Activated CD4-positive, alpha-beta T cell treated with anti-CD3 and anti-CD28 coated beads, Interleukin-2, amount 10 ng/mL, durations not matched to agents 24 days and 14 days (primary cell): ENCODE measurements at regions of chr7 and their contacts with region 1.

Region 1: GRCh38 chr7:39589323-39590111 is 23.3 kb downstream of the YAE1 start:
- DNase-seq: peak; percentile 93
- H3K4me3 Mint-ChIP-seq: peak overlapping the region; percentile 73
- H3K27ac Mint-ChIP-seq: peak overlapping the region; percentile 93
- H3K4me1 Mint-ChIP-seq: peaks cover 38% of the 10 kb centered on the region
- H3K27me3 Mint-ChIP-seq: peaks cover 2% of the 10 kb centered on the region

Region 2: GRCh38 chr7:39609113-39609934 is 19.8 kb after region 1 on chr7:
- intact Hi-C with region 1: loop called (anchors 2 kb)
- DNase-seq: no peak
- H3K4me3 Mint-ChIP-seq: peak overlapping the region; percentile 56
- H3K27ac Mint-ChIP-seq: no peak overlapping the region
- H3K4me1 Mint-ChIP-seq: peaks cover 36% of the 10 kb centered on the region
- H3K27me3 Mint-ChIP-seq: peaks cover 16% of the 10 kb centered on the region

Region 3: GRCh38 chr7:39686261-39686924 is 96.9 kb after region 1 on chr7:
- intact Hi-C with region 1: loop called (anchors 5 kb)
- DNase-seq: no peak
- H3K4me3 Mint-ChIP-seq: no peak overlapping the region
- H3K27ac Mint-ChIP-seq: peak overlapping the region; percentile 30
- H3K4me1 Mint-ChIP-seq: peaks cover 10% of the 10 kb centered on the region
- H3K27me3 Mint-ChIP-seq: no peaks in the 10 kb centered on the region

Region 4: DNA sequence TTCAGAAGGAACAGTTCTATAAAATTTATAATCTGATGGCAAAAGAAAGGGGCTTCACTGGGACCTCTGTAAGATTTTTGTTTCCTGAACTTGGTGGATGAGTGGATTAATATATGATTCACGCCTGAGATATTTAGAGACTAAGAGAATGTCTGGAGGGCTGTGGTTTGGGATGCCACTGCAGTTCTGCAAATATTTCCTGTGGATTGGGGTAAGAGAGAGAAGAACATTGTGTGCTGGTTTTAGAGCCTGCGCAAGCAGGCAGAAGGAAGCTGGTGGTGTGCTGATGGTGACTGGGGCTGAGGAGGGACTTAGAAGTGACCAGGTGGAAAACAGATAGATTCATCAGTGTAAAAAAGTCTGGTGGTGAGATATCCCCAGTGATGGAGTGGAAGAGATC is 632.3 kb after region 1 on chr7:
- intact Hi-C with region 1: no loop called
- DNase-seq: no peak
- H3K4me3 Mint-ChIP-seq: no peak overlapping the region
- H3K27ac Mint-ChIP-seq: no peak overlapping the region
- H3K4me1 Mint-ChIP-seq: no peaks in the 10 kb centered on the region
- H3K27me3 Mint-ChIP-seq: peaks cover 5% of the 10 kb centered on the region